Panc1 (cell line): ENCODE measurements at regions of chr18 and their contacts with region 1.

Region 1: DNA sequence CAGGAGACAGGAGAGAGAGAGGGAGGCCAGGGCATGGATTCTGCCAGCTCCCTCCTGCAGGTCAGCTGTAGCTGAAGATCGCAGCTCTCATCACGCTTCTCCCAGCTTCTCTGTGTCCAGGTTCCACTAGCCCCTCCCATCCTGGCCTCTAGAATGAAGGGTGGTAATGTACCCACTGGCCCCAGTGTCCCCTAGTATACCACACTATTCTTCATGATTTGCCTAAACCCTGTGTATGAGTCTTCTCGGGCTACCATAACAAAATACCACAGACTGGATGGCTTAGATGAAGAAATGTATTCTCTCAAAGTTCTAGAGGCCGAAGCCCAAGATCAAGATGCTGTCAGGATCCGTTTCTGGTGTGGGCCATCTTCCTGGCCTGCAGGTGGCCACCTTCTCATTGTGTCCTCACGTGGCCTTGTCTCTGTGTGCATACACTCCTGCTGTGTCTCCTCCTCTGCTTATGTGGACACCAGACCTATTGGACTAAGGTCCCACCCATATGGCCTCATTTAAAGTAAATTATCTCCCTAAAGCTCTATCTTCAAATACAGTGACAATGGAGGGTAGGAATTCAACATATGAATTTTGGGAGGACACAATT is 77.3 kb downstream of the TNFRSF11A start:
- DNase-seq: no peak
- ATAC-seq: no peak
- H3K4me3 ChIP-seq: no peak overlapping the region
- H3K27ac ChIP-seq: no peak overlapping the region
- H3K4me1 ChIP-seq: peaks cover 2% of the 10 kb centered on the region; the same call in 1 of the 2 replicates
- H3K27me3 ChIP-seq: no peaks in the 10 kb centered on the region
- CTCF ChIP-seq: no peak

Region 2: DNA sequence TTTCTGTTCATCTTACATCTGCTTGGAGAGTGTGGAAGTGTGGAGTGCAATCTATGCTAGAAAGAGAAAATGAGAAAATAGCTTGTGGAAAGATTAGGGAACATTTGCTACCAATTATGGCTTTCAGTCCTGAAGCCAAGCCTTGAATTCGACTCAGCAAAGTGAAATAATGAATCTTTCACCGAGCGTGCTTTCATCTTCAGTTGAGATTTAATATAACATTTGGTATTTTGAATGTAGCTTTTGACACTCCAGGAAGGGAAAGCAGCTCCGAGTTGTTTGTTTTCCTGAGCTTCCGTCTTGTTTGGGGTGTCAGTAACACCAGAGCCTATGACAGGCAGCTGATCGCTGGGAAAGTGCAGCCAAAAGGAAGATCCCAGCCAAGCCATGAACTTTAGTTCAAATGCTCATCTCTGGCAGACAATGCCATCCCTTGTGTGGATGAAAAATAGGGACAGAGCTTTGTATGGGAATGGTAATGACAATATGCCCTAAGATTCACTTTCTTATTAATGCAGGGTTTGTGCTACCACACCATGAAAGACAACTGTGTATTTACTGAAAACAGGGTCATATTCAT is 287.9 kb after region 1 on chr18:
- CTCF ChIA-PET with region 1: interaction called, 13 read pairs
- POLR2A ChIA-PET with region 1: no interaction called
- in situ Hi-C with region 1: no loop called
- intact Hi-C with region 1: no loop called
- DNase-seq: no peak
- ATAC-seq: no peak
- H3K4me3 ChIP-seq: no peak overlapping the region
- H3K27ac ChIP-seq: no peak overlapping the region
- H3K4me1 ChIP-seq: no peaks in the 10 kb centered on the region
- H3K27me3 ChIP-seq: no peaks in the 10 kb centered on the region
- CTCF ChIP-seq: no peak